B cell (primary cell): ENCODE measurements at regions of chrX and their contacts with region 1.

Region 1: GRCh38 chrX:11724122-11725017 is 33.7 kb upstream of the MSL3 start:
- DNase-seq: peak; percentile 36
- ATAC-seq: peak; percentile 47
- H3K4me3 ChIP-seq: no peak overlapping the region
- H3K4me3 Mint-ChIP-seq: no peak overlapping the region
- H3K27ac ChIP-seq: no peak overlapping the region
- H3K27ac Mint-ChIP-seq: no peak overlapping the region
- H3K4me1 ChIP-seq: no peaks in the 10 kb centered on the region
- H3K4me1 Mint-ChIP-seq: no peaks in the 10 kb centered on the region
- H3K27me3 ChIP-seq: no peaks in the 10 kb centered on the region
- H3K27me3 Mint-ChIP-seq: peaks cover 10% of the 10 kb centered on the region
- CTCF ChIP-seq: peak; percentile 68

Region 2: DNA sequence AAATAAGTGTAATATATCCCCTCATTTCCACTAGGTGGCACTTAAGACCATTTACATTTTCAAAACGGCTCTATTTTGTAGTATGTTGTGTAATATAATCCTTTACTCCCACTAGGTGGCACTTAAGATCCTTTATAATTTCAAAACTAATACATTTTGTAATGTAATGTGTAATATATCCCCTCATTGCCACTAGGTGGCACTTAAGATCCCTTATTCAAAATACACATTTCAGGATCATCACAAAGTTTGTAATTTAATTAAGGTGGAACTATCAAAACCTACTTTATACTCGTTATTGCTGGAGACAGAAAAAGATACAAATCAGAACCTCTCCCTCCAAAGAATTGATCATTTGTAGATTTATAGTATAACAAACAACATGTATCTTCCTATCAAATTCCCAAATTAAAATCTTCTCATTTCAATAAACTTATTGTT is 191.1 kb before region 1 on chrX:
- CTCF ChIA-PET with region 1: no interaction called
- POLR2A ChIA-PET with region 1: no interaction called
- intact Hi-C with region 1: loop called (anchors 1 kb)
- DNase-seq: peak; percentile 75
- ATAC-seq: peak; percentile 99
- H3K4me3 ChIP-seq: no peak overlapping the region
- H3K4me3 Mint-ChIP-seq: no peak overlapping the region
- H3K27ac ChIP-seq: no peak overlapping the region
- H3K27ac Mint-ChIP-seq: no peak overlapping the region
- H3K4me1 ChIP-seq: no peaks in the 10 kb centered on the region
- H3K4me1 Mint-ChIP-seq: peaks cover 2% of the 10 kb centered on the region
- H3K27me3 ChIP-seq: peaks cover 0 to 5% (median 0%) of the 10 kb centered on the region in 4 experiments
- H3K27me3 Mint-ChIP-seq: no peaks in the 10 kb centered on the region
- CTCF ChIP-seq: peak; percentile 90